Sigmoid colon (tissue), 7 donors: ENCODE measurements at regions of chr5 and their contacts with region 1.

Region 1: GRCh38 chr5:93092349-93093105 is 488.5 kb downstream of the NR2F1-AS1 start:
- DNase-seq: no peak
- H3K4me3 ChIP-seq: no peak overlapping the region
- H3K27ac ChIP-seq: no peak overlapping the region
- H3K4me1 ChIP-seq: no peaks in the 10 kb centered on the region
- H3K27me3 ChIP-seq: no peaks in the 10 kb centered on the region
- CTCF ChIP-seq: no peak
- EP300 ChIP-seq: no peak
- POLR2A ChIP-seq: no peak

Region 2: DNA sequence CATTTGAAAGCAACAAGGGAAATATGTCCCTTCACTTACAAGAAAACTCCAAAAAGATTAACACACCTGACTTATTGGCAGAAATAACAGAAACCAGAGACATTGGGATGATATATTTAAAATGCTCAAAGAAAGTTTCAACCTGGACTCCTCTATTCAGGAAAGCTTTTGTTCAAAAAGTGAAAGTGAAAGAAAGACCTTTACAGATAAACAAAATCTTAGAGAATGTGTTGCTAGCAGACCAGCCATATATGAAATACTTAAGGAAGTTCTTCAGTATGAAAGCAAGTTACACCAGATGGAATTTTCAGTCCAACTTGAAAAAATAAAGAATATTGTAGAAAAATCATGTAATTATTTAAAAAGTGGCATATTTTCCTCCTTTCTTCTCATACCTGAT is 586.6 kb before region 1 on chr5:
- intact Hi-C with region 1: no loop called
- DNase-seq: no peak
- H3K4me3 ChIP-seq: peak overlapping the region in 1 of 4 donors; percentile 1
- H3K27ac ChIP-seq: no peak overlapping the region
- H3K4me1 ChIP-seq: no peaks in the 10 kb centered on the region
- H3K27me3 ChIP-seq: no peaks in the 10 kb centered on the region
- CTCF ChIP-seq: no peak
- EP300 ChIP-seq: no peak
- POLR2A ChIP-seq: no peak

Region 3: GRCh38 chr5:93249651-93250289 is 157.2 kb after region 1 on chr5:
- intact Hi-C with region 1: loop called (anchors 10 kb)
- DNase-seq: no peak
- H3K4me3 ChIP-seq: peak overlapping the region in 3 of 4 donors; percentile 3 to 11 (median 4)
- H3K27ac ChIP-seq: peak overlapping the region in 3 of 4 donors; percentile 29 to 50 (median 33)
- H3K4me1 ChIP-seq: peaks cover 0 to 26% (median 15%) of the 10 kb centered on the region in 4 donors
- H3K27me3 ChIP-seq: no peaks in the 10 kb centered on the region
- CTCF ChIP-seq: no peak
- EP300 ChIP-seq: no peak
- POLR2A ChIP-seq: no peak